GM13976 (cell line): ENCODE measurements at regions of chr6 and their contacts with region 1.

Region 1: GRCh38 chr6:41092421-41093140 is 19.8 kb downstream of the NFYA start:
- DNase-seq: peak; percentile 42
- CTCF ChIP-seq: no peak

Region 2: GRCh38 chr6:41325446-41326066 is 233.0 kb after region 1 on chr6:
- in situ Hi-C with region 1: loop called (anchors 10 kb)
- DNase-seq: no peak
- CTCF ChIP-seq: no peak